ENCODE measurements at regions of chr12 and their contacts with region 1.

Region 1: DNA sequence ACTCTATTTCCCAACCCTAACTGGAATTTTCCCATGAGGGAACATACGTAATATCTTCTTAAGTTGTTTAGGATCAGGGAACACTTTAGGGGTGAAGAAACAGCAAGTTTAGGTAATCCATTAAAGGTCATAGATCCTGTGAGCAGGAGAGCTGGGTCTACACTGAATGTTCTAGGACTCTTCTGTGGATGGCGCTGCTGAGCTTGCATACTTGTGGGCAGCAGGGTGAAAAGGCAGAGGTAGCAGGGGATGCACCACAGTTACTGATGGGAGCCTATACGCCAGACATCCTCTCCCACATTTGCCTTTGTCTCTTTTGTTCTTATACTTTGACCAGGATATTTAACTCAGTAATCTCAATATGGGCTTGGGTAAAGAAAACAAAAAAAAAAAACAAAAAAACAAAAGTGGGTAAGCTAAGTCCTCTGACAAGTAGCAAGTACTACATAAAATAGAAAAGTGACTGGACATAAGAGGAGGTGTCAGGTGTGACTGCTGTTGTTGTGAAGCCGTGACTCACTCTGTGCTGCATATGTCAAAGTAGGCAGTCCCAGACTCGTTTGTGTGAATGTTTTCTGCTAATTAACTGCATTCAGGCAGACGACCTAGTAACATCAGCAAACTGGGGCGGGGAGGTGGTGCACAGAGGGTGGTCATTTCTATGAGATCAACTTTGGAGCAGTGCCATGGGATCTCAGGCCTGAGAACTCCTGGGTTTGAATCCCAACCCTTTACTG is 31.6 kb downstream of the NEUROD4 start:
- DNase-seq: no peak
- H3K4me3 ChIP-seq: no peak overlapping the region
- H3K4me3 Mint-ChIP-seq: no peak overlapping the region
- H3K27ac ChIP-seq: no peak overlapping the region
- H3K27ac Mint-ChIP-seq: no peak overlapping the region
- H3K4me1 ChIP-seq: no peaks in the 10 kb centered on the region
- H3K4me1 Mint-ChIP-seq: no peaks in the 10 kb centered on the region
- H3K27me3 ChIP-seq: no peaks in the 10 kb centered on the region
- H3K27me3 Mint-ChIP-seq: peaks cover 0 to 2% (median 0%) of the 10 kb centered on the region in 3 donors
- CTCF ChIP-seq: no peak

Region 2: GRCh38 chr12:54773590-54773989 is 277.8 kb before region 1 on chr12:
- intact Hi-C with region 1: no loop called
- DNase-seq: no peak
- H3K4me3 ChIP-seq: no peak overlapping the region
- H3K4me3 Mint-ChIP-seq: no peak overlapping the region
- H3K27ac ChIP-seq: no peak overlapping the region
- H3K27ac Mint-ChIP-seq: no peak overlapping the region
- H3K4me1 ChIP-seq: no peaks in the 10 kb centered on the region
- H3K4me1 Mint-ChIP-seq: no peaks in the 10 kb centered on the region
- H3K27me3 ChIP-seq: no peaks in the 10 kb centered on the region
- H3K27me3 Mint-ChIP-seq: peaks cover 3 to 4% (median 3%) of the 10 kb centered on the region in 3 donors
- CTCF ChIP-seq: no peak

Region 3: GRCh38 chr12:55001198-55001868 is 50.0 kb before region 1 on chr12:
- intact Hi-C with region 1: no loop called
- DNase-seq: peak; percentile 6 to 28 (median 14)
- H3K4me3 ChIP-seq: no peak overlapping the region
- H3K4me3 Mint-ChIP-seq: peak overlapping the region in 1 of 2 donors; percentile 36
- H3K27ac ChIP-seq: no peak overlapping the region
- H3K27ac Mint-ChIP-seq: peak overlapping the region in 4 of 7 donors; percentile 44 to 70 (median 56)
- H3K4me1 ChIP-seq: peaks cover 8 to 9% of the 10 kb centered on the region in 2 donors
- H3K4me1 Mint-ChIP-seq: peaks cover 17% of the 10 kb centered on the region
- H3K27me3 ChIP-seq: no peaks in the 10 kb centered on the region
- H3K27me3 Mint-ChIP-seq: peaks cover 0 to 7% (median 7%) of the 10 kb centered on the region in 3 donors
- CTCF ChIP-seq: no peak

Region 4: DNA sequence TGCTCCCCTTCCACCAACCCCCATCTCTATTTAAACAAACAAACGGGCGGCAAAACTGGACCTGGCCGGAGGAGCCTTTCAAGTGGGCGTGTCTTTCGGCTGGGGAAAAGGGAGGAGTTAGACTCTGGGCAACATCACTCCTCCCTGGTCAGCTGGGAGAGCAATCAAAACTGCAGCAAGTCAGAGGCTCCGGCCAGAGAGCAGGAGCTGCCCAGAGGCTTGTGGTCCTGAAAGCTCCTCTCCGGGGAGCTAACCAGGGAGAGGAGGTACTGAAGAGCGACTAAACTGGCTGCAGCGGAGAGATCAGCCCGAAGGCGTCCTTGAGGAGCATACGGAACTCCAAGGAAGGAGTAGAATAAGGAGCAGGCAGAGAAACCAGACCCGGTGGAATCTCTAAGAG is 31.6 kb before region 1 on chr12 and contains the start of gene NEUROD4:
- intact Hi-C with region 1: loop called in 1 of 2 experiments (anchors 5 kb)
- DNase-seq: peak; percentile 33 to 53 (median 46)
- H3K4me3 ChIP-seq: peak within 1 kb of the TSS in 1 of 3 experiments; percentile 23
- H3K4me3 Mint-ChIP-seq: peak within 1 kb of the TSS; percentile 51 to 88
- H3K27ac ChIP-seq: no peak within 1 kb of the TSS
- H3K27ac Mint-ChIP-seq: no peak within 1 kb of the TSS
- H3K4me1 ChIP-seq: peaks cover 7 to 8% of the 10 kb centered on the region in 2 donors
- H3K4me1 Mint-ChIP-seq: peaks cover 10% of the 10 kb centered on the region
- H3K27me3 ChIP-seq: peaks cover 61 to 84% of the 10 kb centered on the region in 2 donors
- H3K27me3 Mint-ChIP-seq: peaks cover 27 to 54% (median 42%) of the 10 kb centered on the region in 3 donors
- CTCF ChIP-seq: no peak
- polyA plus RNA-seq, gene NEUROD4: not detected

Region 5: GRCh38 chr12:55142669-55143565 is 91.6 kb after region 1 on chr12:
- intact Hi-C with region 1: no loop called
- DNase-seq: peak; percentile 5 to 13 (median 11)
- H3K4me3 ChIP-seq: no peak overlapping the region
- H3K4me3 Mint-ChIP-seq: no peak overlapping the region
- H3K27ac ChIP-seq: no peak overlapping the region
- H3K27ac Mint-ChIP-seq: no peak overlapping the region
- H3K4me1 ChIP-seq: no peaks in the 10 kb centered on the region
- H3K4me1 Mint-ChIP-seq: no peaks in the 10 kb centered on the region
- H3K27me3 ChIP-seq: no peaks in the 10 kb centered on the region
- H3K27me3 Mint-ChIP-seq: peaks cover 4 to 14% (median 4%) of the 10 kb centered on the region in 3 donors
- CTCF ChIP-seq: peak; percentile 81

Region 6: GRCh38 chr12:55289999-55290398 is 238.6 kb after region 1 on chr12:
- intact Hi-C with region 1: no loop called
- DNase-seq: no peak
- H3K4me3 ChIP-seq: no peak overlapping the region
- H3K4me3 Mint-ChIP-seq: no peak overlapping the region
- H3K27ac ChIP-seq: no peak overlapping the region
- H3K27ac Mint-ChIP-seq: no peak overlapping the region
- H3K4me1 ChIP-seq: no peaks in the 10 kb centered on the region
- H3K4me1 Mint-ChIP-seq: no peaks in the 10 kb centered on the region
- H3K27me3 ChIP-seq: peaks cover 0 to 2% of the 10 kb centered on the region in 2 donors
- H3K27me3 Mint-ChIP-seq: peaks cover 1 to 7% (median 7%) of the 10 kb centered on the region in 3 donors
- CTCF ChIP-seq: no peak

Measured in CD14-positive monocyte (primary cell).